Common myeloid progenitor, CD34-positive (primary cell): ENCODE measurements at regions of chr3 and their contacts with region 1.

Region 1: GRCh38 chr3:42263354-42264346 is 2.3 kb downstream of the CCK start:
- DNase-seq: peak; percentile 11 to 53 (median 39)
- H3K4me3 ChIP-seq: peak overlapping the region in 4 of 7 experiments; percentile 38 to 68 (median 56)
- H3K27ac ChIP-seq: no peak overlapping the region
- H3K4me1 ChIP-seq: peaks cover 0 to 18% (median 12%) of the 10 kb centered on the region in 4 experiments
- H3K27me3 ChIP-seq: peaks cover 4 to 89% (median 30%) of the 10 kb centered on the region in 5 experiments

Region 2: GRCh38 chr3:42247576-42248027 is 16.0 kb before region 1 on chr3:
- CTCF ChIA-PET with region 1: interaction called, 23 read pairs
- POLR2A ChIA-PET with region 1: no interaction called
- DNase-seq: peak; percentile 65 to 83 (median 80)
- H3K4me3 ChIP-seq: peak overlapping the region in 1 of 7 experiments; percentile 26
- H3K27ac ChIP-seq: no peak overlapping the region
- H3K4me1 ChIP-seq: no peaks in the 10 kb centered on the region
- H3K27me3 ChIP-seq: peaks cover 4 to 19% (median 10%) of the 10 kb centered on the region in 5 experiments